Dorsolateral prefrontal cortex (tissue), 120 donors: ENCODE measurements at regions of chrX and their contacts with region 1.

Region 1: GRCh38 chrX:118345401-118346257 is at the start of gene WDR44:
- DNase-seq: peak; percentile 79 to 93 (median 90)
- H3K4me3 ChIP-seq: peak within 1 kb of the TSS; percentile 43 to 84 (median 71)
- H3K27ac ChIP-seq: peak within 1 kb of the TSS in 56 of 59 donors; percentile 52 to 95 (median 87)
- H3K27me3 ChIP-seq: peaks cover 0 to 26% (median 0%) of the 10 kb centered on the region in 45 donors
- CTCF ChIP-seq: peak in 4 of 56 donors; percentile 1 to 13 (median 7)
- total RNA-seq, gene WDR44: 16.4 to 29.6 (median 23.3) TPM

Region 2: DNA sequence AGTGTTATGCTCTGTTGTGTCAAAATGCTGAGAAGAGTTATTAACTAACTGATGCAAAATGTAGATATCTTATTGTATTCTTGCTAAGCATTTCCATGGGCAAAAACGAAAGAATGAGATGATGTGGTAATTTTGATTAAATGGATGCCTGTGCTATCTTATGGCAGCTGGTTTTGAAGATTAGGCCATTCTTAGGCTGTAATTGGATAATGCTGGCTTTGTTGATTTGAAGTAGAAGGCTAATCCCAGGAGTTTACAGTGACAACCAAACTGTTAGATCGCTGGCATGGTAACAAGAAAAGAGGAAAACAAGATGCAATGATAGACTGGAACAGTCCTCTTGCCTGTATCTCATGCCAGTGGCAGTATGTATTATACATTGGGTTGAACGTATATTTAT is 73.9 kb before region 1 on chrX:
- intact Hi-C with region 1: no loop called
- DNase-seq: no peak
- H3K4me3 ChIP-seq: no peak overlapping the region
- H3K27ac ChIP-seq: no peak overlapping the region
- H3K27me3 ChIP-seq: peaks cover 0 to 28% (median 2%) of the 10 kb centered on the region in 45 donors
- CTCF ChIP-seq: no peak

Region 3: GRCh38 chrX:118367338-118367737 is 21.7 kb after region 1 on chrX:
- intact Hi-C with region 1: no loop called
- DNase-seq: no peak
- H3K4me3 ChIP-seq: no peak overlapping the region
- H3K27ac ChIP-seq: no peak overlapping the region
- H3K27me3 ChIP-seq: peaks cover 0 to 33% (median 3%) of the 10 kb centered on the region in 45 donors
- CTCF ChIP-seq: no peak

Region 4: DNA sequence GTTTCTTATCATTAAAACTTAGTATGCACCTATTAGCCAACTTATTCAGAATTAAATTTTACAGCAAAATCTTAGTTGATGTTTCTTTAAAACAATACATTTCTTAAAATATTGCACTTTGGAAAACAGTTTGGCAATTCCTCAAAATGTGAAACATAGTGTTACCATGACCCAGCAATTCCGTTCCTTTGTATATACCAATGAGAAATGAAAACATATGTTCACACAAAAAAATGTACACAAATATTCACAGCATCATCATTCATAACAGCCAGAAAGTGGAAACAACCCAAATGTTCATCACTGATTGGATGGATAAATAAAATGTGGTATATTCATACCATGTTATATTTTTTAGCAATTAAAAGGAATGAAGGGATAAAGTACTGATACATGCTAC is 50.5 kb after region 1 on chrX:
- intact Hi-C with region 1: no loop called
- DNase-seq: no peak
- H3K4me3 ChIP-seq: no peak overlapping the region
- H3K27ac ChIP-seq: no peak overlapping the region
- H3K27me3 ChIP-seq: peaks cover 0 to 28% (median 2%) of the 10 kb centered on the region in 45 donors
- CTCF ChIP-seq: no peak

Region 5: DNA sequence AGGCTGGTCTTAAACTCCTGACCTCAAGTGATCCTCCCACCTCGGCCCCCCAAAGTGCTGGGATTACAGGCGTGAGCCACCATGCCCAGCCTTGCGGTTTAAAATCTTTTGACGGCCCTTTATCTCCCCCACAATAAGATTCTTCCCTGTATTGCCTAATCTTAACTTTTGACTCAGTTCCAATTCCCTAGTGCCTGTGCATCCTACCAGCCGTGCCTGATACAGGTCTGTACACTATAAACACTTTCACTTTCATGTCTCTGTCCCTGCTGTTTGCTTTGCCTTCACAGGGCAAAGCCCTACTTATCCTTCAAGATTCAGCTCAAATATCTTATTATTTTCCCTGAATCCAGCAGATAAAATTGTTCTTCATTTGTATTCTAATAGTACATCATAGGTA is 74.8 kb after region 1 on chrX:
- intact Hi-C with region 1: loop called in 1 of 2 experiments (anchors 5 kb)
- DNase-seq: no peak
- H3K4me3 ChIP-seq: peak overlapping the region in 19 of 59 donors; percentile 6 to 43 (median 21)
- H3K27ac ChIP-seq: peak overlapping the region in 51 of 59 donors; percentile 0 to 83 (median 57)
- H3K27me3 ChIP-seq: peaks cover 0 to 27% (median under 1%) of the 10 kb centered on the region in 45 donors
- CTCF ChIP-seq: no peak

Region 6: DNA sequence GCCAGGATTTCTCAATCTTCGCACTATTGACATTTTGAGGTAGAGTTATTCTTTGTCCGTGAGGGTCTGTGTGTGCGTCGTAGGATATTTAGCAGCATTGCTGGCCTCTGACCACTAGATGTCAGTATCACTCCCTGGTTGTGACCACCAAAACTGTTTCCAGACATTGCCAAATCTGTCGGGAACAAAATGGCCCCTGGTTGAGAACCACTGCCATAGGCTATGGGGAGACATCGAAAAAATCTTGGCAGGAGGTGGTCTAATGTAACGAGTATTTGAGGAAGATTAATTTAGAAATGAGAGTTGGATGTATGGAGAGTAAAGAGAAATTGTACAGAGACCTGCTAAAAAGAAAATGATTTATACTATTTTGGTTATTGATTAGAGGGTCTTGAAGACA is 258.4 kb after region 1 on chrX:
- intact Hi-C with region 1: loop called in 1 of 2 experiments (anchors 10 kb)
- DNase-seq: peak in 5 of 10 donors; percentile 10 to 46 (median 36)
- H3K4me3 ChIP-seq: peak overlapping the region in 24 of 59 donors; percentile 3 to 42 (median 26)
- H3K27ac ChIP-seq: peak overlapping the region in 4 of 59 donors; percentile 3 to 35 (median 29)
- H3K27me3 ChIP-seq: peaks cover 0 to 44% (median 3%) of the 10 kb centered on the region in 45 donors
- CTCF ChIP-seq: peak; percentile 51 to 91 (median 82)

Region 7: DNA sequence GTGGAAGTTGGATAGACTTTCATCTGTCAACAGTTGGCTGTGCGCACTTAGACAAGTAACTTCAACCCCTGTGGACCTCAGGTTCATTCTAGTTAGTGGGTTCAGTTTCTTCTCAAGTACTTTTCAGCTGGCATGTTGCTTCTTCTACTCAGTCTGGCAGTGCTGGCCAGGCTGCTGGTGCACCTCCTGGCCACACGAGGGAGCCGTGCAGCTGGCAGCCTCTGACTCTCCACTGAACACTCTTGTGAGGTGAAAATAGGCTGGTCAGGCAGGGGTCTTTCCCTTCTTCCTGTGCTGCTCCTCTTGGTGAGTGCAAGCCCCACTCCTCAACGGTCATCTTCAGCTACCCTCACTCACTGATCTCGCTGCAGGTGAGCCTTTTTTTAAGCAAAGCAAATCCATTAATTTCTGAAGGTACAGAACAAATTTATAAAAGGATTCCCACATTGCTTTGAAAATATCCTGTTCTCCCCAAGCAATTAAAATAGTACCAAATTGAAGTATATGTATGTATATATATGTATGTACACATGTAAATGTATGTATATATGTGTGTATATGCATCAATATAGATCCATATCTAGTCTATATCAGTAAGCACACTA is 659.4 kb after region 1 on chrX:
- intact Hi-C with region 1: loop called in 1 of 2 experiments (anchors 10 kb)
- DNase-seq: peak in 7 of 10 donors; percentile 43 to 75 (median 46)
- H3K4me3 ChIP-seq: no peak overlapping the region
- H3K27ac ChIP-seq: no peak overlapping the region
- H3K27me3 ChIP-seq: peaks cover 0 to 71% (median 7%) of the 10 kb centered on the region in 45 donors
- CTCF ChIP-seq: peak in 55 of 56 donors; percentile 18 to 86 (median 74)